Esophagus muscularis mucosa (tissue), 4 donors: ENCODE measurements at regions of chr21 and their contacts with region 1.

Region 1: DNA sequence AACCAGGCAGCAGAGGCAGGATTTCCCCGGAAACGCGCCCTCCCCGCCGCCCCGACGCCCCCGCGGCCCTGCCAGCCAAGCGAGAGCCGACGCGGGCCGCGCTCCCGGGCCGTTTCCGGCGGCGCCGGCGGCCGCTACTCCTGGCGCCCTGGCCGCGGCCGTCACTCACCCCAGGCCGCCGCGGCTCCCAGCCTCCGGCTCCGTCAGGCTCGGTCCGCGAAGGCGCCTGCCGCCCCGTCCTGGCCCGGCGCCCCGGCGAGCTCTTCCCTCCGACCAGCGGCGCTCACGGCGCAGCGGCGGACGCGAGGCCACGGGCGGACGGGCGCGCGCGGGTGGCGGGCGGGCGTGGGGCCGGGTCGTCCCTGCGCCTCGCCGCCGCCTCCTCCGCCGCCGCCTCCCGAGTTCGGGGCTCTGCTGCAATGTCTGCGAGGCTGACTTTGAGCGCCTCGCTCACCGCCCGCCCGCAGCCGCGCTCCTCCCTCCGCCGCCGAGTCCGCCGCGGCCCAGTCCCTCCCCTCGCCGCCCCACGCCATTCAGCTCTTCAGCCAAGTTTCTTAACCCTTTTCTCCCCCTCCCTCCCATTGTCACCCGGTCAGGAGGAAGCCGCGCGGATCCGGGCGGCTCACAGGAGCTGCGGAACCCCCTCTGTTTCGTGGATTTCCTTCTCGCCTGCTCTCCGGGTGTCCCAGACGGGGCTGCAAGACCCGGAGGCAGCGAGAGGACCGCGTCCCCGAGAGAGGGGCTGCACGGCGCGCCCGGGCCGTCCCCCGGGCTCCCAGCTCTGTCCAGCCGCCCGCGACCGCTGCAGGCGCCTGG is at the start of gene NRIP1:
- DNase-seq: peak; percentile 96
- H3K4me3 ChIP-seq: peak within 1 kb of the TSS; percentile 67 to 96 (median 92)
- H3K27ac ChIP-seq: peak within 1 kb of the TSS; percentile 97 to 98 (median 98)
- H3K4me1 ChIP-seq: peaks cover 29 to 46% (median 37%) of the 10 kb centered on the region in 4 donors
- H3K27me3 ChIP-seq: no peaks in the 10 kb centered on the region
- CTCF ChIP-seq: no peak
- EP300 ChIP-seq: no peak
- POLR2A ChIP-seq: no peak
- total RNA-seq, gene NRIP1: 21.7 to 33.3 (median 28.5) TPM

Region 2: GRCh38 chr21:14382835-14383594 is 681.8 kb before region 1 on chr21 and contains the start of gene HSPA13:
- intact Hi-C with region 1: loop called (anchors 5 kb)
- DNase-seq: peak; percentile 100
- H3K4me3 ChIP-seq: peak within 1 kb of the TSS; percentile 70 to 90 (median 80)
- H3K27ac ChIP-seq: peak within 1 kb of the TSS; percentile 83 to 91 (median 91)
- H3K4me1 ChIP-seq: peaks cover 8 to 39% (median 36%) of the 10 kb centered on the region in 4 donors
- H3K27me3 ChIP-seq: no peaks in the 10 kb centered on the region
- CTCF ChIP-seq: no peak
- EP300 ChIP-seq: no peak
- POLR2A ChIP-seq: no peak
- total RNA-seq, gene HSPA13: 14.4 to 18.7 (median 15.4) TPM

Region 3: DNA sequence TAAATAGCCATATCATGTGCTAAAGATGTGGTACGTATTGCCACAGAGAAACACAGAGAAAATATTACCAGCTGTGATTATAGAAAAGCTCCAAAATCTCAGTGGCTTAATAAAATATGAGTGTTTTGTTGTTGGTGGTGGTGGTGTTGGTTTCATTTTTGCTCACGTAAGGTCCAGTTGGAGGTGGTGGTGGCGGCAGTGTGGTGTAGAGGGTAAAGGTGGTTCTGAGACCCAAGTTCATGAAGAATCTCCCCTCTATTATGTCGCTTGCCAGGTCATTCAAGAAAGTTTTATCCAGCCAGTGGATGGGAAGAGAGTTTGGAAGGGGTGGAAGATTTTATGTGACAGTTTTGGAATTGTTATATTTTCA is 301.1 kb before region 1 on chr21:
- intact Hi-C with region 1: no loop called
- DNase-seq: no peak
- H3K4me3 ChIP-seq: no peak overlapping the region
- H3K27ac ChIP-seq: no peak overlapping the region
- H3K4me1 ChIP-seq: no peaks in the 10 kb centered on the region
- H3K27me3 ChIP-seq: no peaks in the 10 kb centered on the region
- CTCF ChIP-seq: no peak
- EP300 ChIP-seq: no peak
- POLR2A ChIP-seq: no peak

Region 4: GRCh38 chr21:14864211-14865021 is 200.4 kb before region 1 on chr21:
- intact Hi-C with region 1: loop called (anchors 5 kb)
- DNase-seq: no peak
- H3K4me3 ChIP-seq: no peak overlapping the region
- H3K27ac ChIP-seq: peak overlapping the region; percentile 3 to 46 (median 25)
- H3K4me1 ChIP-seq: peaks cover 8 to 44% (median 35%) of the 10 kb centered on the region in 4 donors
- H3K27me3 ChIP-seq: no peaks in the 10 kb centered on the region
- CTCF ChIP-seq: peak; percentile 50 to 60 (median 56)
- EP300 ChIP-seq: no peak
- POLR2A ChIP-seq: no peak